ENCODE measurements at regions of chr2 and their contacts with region 1.

Region 1: DNA sequence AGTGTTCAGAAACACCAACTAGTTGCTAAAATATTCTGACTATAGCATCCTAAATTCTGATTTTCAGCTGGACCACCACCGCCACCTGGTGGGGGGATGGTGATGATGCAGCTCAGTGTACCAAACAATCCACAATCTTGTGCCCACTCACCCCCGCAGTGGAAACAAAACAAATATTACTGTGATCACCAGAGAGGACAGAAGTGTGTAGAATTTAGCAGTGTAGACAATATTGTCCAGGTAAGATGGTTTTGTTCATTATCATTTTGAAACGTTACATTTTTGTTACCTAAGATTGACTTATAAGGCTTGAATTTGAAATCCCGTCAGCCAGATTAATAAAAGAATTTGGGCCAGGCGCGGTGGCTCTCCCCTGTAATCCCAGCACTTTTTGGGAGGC is 31.7 kb upstream of the UBXN4 start:
- DNase-seq: peak; percentile 82
- H3K4me3 Mint-ChIP-seq: no peak overlapping the region
- H3K27ac Mint-ChIP-seq: no peak overlapping the region
- H3K4me1 Mint-ChIP-seq: no peaks in the 10 kb centered on the region
- H3K27me3 Mint-ChIP-seq: no peaks in the 10 kb centered on the region

Region 2: GRCh38 chr2:134988994-134989605 is 720.9 kb before region 1 on chr2:
- CTCF ChIA-PET with region 1: interaction called, 4 read pairs
- intact Hi-C with region 1: loop called (anchors 1 kb)
- DNase-seq: no peak
- H3K4me3 Mint-ChIP-seq: no peak overlapping the region
- H3K27ac Mint-ChIP-seq: no peak overlapping the region
- H3K4me1 Mint-ChIP-seq: no peaks in the 10 kb centered on the region
- H3K27me3 Mint-ChIP-seq: no peaks in the 10 kb centered on the region

Region 3: GRCh38 chr2:135245055-135245454 is 464.9 kb before region 1 on chr2:
- CTCF ChIA-PET with region 1: no interaction called
- intact Hi-C with region 1: loop called (anchors 5 kb)
- DNase-seq: peak; percentile 45
- H3K4me3 Mint-ChIP-seq: no peak overlapping the region
- H3K27ac Mint-ChIP-seq: peak overlapping the region; percentile 84
- H3K4me1 Mint-ChIP-seq: peaks cover 12% of the 10 kb centered on the region
- H3K27me3 Mint-ChIP-seq: no peaks in the 10 kb centered on the region

Region 4: GRCh38 chr2:135473567-135473966 is 236.4 kb before region 1 on chr2:
- CTCF ChIA-PET with region 1: interaction called, 27 read pairs
- intact Hi-C with region 1: loop called (anchors 1 kb)
- DNase-seq: peak; percentile 40
- H3K4me3 Mint-ChIP-seq: no peak overlapping the region
- H3K27ac Mint-ChIP-seq: no peak overlapping the region
- H3K4me1 Mint-ChIP-seq: peaks cover 2% of the 10 kb centered on the region
- H3K27me3 Mint-ChIP-seq: no peaks in the 10 kb centered on the region

Region 5: GRCh38 chr2:135657806-135658582 is 52.0 kb before region 1 on chr2:
- CTCF ChIA-PET with region 1: interaction called, 14 read pairs
- intact Hi-C with region 1: no loop called
- DNase-seq: peak; percentile 60
- H3K4me3 Mint-ChIP-seq: peak overlapping the region; percentile 52
- H3K27ac Mint-ChIP-seq: no peak overlapping the region
- H3K4me1 Mint-ChIP-seq: peaks cover 17% of the 10 kb centered on the region
- H3K27me3 Mint-ChIP-seq: no peaks in the 10 kb centered on the region

Region 6: DNA sequence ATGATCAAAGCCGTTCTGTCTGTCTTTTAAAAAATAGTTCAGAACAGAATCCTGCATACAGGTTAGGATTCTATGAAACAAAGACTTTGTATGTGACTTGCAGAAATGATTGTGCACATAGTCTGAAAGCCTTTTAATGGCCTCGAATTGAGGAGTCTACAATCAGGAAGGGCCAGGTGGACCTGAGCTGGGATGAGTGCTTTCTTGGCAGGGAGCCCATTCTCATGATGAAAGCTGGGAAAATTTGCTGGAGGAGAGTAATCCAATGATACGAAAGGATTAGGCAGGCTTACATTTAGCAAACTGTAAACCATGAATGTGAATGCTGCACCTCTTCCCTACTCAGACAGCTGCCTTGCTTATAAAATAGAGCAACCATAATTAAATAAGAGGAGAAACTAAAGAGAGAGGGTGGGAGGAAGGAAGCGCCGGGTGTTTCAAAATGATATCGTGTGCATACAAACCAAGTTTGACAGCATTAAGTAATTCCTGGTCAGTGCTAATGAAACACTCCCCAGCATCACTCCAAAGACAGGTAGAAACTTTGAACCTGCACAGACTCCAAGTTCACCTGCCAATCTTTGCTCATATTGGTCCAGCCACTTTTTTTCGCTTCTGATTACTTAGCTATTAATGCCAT is 431.6 kb after region 1 on chr2:
- CTCF ChIA-PET with region 1: no interaction called
- intact Hi-C with region 1: no loop called
- DNase-seq: no peak
- H3K4me3 Mint-ChIP-seq: no peak overlapping the region
- H3K27ac Mint-ChIP-seq: no peak overlapping the region
- H3K4me1 Mint-ChIP-seq: peaks cover 59% of the 10 kb centered on the region
- H3K27me3 Mint-ChIP-seq: peaks cover 14% of the 10 kb centered on the region

Measured in activated naive CD4-positive, alpha-beta T cell treated with anti-CD3 and anti-CD28 coated beads for 36 hours (primary cell).